ENCODE measurements at regions of chr9 and their contacts with region 1.

Region 1: GRCh38 chr9:124325816-124326215 is 68.1 kb downstream of the NEK6 start:
- DNase-seq: no peak
- H3K4me3 ChIP-seq: no peak overlapping the region
- H3K27ac ChIP-seq: no peak overlapping the region
- H3K4me1 ChIP-seq: no peaks in the 10 kb centered on the region
- H3K27me3 ChIP-seq: no peaks in the 10 kb centered on the region
- CTCF ChIP-seq: no peak

Region 2: DNA sequence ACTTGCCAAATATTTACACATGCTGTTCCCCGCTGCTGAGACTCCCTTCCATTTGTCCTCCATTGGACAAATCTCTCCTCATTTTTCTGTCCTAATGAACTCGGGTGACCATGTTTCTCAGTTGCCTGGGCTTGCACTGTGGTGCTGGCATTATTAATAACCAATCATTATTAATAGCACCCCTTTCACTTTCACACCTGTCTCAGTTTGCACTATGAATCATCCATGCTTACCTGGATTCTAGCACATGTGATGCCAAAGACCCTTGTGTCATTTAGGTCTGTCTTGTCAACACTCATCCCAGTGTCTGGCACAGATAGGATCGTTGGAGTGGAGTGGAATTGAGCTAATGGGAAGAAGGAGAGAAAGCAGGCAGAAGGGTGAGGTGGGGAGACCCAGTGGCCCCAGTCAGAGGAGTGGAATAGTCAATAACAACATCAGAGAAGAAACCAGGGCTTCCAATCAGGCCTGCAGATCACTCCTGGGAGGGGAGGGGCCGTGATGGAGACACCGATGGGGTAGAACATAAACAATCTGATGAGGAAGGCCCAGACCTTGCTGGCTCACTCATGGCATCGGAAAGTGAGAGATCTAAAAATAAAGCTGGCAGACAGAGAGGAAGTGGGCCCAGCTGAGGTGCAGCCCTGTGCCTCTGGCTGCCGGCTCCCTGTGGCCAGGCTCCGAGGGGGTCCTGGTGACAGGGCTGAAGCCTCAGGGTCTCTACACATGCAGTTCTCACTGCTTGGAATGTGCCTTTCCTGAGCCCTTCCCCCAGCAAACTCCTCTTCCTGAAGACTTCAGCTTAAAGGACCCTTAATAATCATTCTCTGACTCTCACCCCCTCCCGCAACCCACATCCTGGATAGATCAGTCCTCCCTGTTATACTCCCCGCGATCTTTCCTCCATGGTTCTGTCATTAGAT is 1003.3 kb before region 1 on chr9:
- CTCF ChIA-PET with region 1: no interaction called
- POLR2A ChIA-PET with region 1: interaction called, 16 read pairs
- intact Hi-C with region 1: no loop called
- DNase-seq: peak; percentile 64
- H3K4me3 ChIP-seq: no peak overlapping the region
- H3K27ac ChIP-seq: peak overlapping the region; percentile 68
- H3K4me1 ChIP-seq: peaks cover 27% of the 10 kb centered on the region
- H3K27me3 ChIP-seq: no peaks in the 10 kb centered on the region
- CTCF ChIP-seq: no peak

Measured in A673 (cell line).